HEK293 (cell line): ENCODE measurements at regions of chrX and their contacts with region 1.

Region 1: DNA sequence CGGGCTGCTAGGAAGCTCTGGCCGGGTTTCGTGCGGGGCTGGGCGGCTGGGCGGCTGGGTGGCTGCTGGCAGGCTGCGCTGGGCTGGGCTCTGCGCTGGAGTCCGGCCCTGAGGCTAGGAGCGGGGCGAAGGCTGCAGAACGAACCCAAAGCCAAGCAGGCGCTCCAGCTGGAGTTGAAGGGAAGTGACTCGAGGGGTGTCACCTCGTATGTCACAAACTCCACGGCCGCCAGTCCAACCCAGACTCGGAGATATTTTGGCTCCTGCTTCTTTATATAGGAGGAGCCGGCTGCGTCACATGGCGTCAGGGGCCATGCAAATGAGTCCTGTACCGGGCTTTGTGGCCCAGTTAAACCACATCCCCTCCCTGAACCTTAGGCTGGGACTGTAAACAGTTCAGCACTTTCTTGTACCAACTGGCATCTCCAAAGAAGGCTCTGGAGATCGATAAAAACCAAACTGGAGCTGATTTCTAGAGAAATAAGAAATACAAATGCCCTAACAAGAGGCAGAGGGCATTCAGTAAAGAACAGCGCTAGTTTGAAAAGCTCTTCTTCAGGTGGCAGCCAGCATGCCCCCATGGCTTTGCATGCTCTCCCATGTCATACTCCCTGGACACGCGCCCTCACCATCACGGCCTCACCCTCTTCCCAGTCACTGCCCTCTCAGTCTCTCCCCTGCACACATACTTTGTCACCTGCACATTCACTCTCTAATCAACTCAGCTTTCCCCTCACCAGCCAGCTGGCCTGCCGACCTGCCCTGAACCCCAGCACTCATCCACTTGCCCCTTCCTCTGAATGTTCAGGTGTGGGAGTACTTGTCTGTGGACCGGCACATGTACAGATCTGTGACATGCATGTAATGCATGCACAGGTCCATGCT is 58.5 kb downstream of the TSC22D3 start:
- H3K4me3 ChIP-seq: peak overlapping the region; percentile 44
- H3K27ac ChIP-seq: peak overlapping the region; percentile 87
- H3K4me1 ChIP-seq: peaks cover 10% of the 10 kb centered on the region
- CTCF ChIP-seq: peak; percentile 13; the same call in 1 of the 2 replicates

Region 2: DNA sequence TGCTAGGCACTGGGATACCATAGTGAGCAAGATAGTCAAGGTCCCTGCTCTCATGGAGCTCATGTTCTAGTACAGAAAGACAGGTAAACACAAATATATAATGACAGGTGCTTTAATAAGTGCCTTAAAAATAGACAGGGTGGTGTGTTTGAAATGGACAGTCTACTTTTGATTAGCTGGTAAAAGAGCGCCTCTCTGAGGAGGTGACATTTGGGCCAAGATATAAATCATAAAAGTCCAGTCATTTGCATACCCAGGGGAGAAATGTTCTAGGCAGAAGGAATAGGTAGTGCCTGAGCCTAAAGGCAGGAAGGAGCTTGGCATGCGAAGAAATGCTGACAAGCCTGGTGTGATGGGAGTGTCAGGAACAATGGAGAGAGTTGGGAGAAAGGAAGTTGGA is 427.0 kb before region 1 on chrX:
- CTCF ChIA-PET with region 1: no interaction called
- POLR2A ChIA-PET with region 1: no interaction called
- H3K4me3 ChIP-seq: no peak overlapping the region
- H3K27ac ChIP-seq: no peak overlapping the region
- H3K4me1 ChIP-seq: no peaks in the 10 kb centered on the region
- CTCF ChIP-seq: no peak

Region 3: DNA sequence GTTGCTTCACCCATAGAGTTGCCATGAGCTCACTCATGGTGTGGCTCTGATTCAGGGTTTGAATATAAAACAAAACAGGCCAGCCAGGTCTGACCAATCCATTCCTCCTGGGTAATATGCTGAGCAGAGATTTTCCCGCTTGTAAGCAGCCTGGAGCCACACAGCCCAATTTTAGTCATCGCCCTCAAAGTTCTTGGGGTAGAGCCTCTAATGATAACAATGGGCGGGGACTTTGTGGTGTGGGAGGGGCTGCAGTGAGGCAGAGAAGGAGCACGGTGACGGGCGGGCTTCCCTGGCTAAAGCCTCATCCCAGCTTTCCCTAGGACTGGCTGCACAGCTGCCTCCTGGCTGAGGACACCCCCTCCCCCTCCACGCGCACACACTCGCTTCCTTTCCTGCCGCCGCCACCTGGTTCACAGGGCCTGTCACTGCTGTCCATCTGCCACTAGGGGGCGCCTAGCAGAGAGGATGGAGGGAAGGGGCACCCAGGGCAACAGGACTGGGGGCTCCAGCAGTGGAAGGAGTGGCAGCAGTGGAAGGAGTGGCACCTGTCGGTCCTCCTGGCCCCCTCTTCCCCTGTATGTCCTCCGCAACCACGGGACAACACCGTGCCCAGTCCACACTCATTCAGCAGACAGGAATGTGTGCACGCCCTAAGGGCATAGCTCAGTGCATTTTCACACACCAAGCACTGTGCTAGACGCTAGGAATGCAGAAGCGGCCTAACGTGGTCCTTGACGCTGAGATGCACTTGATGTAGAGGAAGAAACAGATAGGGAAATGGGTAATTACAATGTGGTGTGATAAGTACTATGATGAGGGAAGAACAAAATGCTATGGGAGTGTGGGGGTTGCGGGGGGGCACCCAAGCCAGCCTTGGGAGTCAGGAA is 61.9 kb before region 1 on chrX:
- CTCF ChIA-PET with region 1: interaction called, 22 read pairs
- POLR2A ChIA-PET with region 1: interaction called, 3 read pairs
- H3K4me3 ChIP-seq: no peak overlapping the region
- H3K27ac ChIP-seq: no peak overlapping the region
- H3K4me1 ChIP-seq: no peaks in the 10 kb centered on the region
- CTCF ChIP-seq: peak; percentile 76

Region 4: DNA sequence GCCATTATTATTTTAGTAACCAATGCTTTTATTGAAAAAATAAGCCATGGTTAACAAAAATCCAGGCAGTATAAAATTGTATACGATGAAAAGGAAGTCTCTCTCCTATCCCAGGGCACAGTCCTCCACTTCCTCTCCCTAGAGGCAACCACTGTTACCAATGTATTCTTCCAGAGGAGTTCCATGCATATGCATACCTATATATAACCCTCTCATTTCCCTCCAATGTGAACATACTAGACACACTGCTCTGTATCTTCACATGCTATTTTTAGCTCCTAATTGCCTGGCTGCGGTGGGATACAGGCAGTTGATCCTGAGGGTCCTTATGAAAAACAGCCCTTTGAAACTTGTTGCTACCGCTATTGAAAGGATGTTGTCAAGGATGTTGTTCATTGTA is 54.9 kb before region 1 on chrX:
- CTCF ChIA-PET with region 1: interaction called, 22 read pairs
- POLR2A ChIA-PET with region 1: interaction called, 3 read pairs
- H3K4me3 ChIP-seq: no peak overlapping the region
- H3K27ac ChIP-seq: no peak overlapping the region
- H3K4me1 ChIP-seq: no peaks in the 10 kb centered on the region
- CTCF ChIP-seq: no peak

Region 5: DNA sequence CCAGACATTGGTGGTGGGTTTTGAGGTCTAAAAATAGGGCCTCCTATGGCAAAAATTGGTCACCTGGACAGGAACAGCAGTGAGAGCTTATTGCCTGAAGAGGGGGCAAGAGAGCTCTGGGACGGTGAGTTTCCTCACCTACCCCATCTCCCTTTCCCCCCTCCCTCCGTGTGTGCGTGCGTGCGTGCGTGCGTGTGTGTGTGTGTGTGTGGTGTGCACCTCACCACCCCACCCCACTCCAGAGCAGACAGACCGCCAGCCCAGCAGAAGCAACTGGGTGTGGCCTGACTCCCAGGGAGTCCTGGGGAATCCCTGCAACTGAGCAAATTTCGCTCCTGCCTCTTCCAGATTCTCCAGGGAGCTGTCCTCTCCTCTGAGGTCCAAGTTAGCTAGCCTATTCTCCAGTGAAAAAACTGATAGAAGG is 44.1 kb before region 1 on chrX:
- CTCF ChIA-PET with region 1: interaction called, 161 read pairs
- POLR2A ChIA-PET with region 1: interaction called, 31 read pairs
- H3K4me3 ChIP-seq: no peak overlapping the region
- H3K27ac ChIP-seq: peak overlapping the region; percentile 32; the same call in 1 of the 2 replicates
- H3K4me1 ChIP-seq: peaks cover 21% of the 10 kb centered on the region
- CTCF ChIP-seq: peak; percentile 77

Region 6: DNA sequence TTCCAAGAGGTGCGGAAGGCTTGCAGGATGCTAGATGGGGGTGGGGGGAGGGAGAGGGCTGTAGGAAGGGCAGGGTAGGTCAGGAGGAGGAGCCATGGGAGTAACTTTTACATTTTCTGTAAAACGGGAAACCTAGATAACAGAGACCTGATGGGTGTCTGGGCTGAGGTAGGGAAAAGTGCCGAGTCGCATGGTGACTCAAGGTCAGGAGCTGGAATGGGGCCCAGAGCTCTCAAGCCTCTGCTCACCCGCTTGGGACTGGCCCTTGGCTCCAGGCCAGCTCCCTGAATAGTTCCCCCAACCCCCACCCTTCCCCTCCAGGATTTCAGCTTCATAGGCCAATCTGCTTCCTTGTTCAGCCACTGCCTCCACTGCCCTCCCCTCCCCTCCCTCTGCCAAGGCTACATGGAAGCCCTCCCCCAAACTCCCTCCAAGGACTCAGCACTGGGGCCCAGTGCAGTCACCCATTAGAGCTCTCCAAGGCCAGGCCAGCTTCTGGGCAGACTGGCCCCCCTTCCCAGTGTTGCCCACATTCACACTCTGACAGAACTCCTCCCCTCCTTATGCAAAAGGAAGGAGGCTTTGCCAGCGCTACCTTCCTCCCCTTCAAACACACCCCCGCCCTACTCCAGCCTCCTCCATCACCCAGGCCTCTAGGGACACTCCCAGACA is 14.9 kb after region 1 on chrX:
- CTCF ChIA-PET with region 1: interaction called, 16 read pairs
- POLR2A ChIA-PET with region 1: interaction called, 45 read pairs
- H3K4me3 ChIP-seq: no peak overlapping the region
- H3K27ac ChIP-seq: peak overlapping the region; percentile 70
- H3K4me1 ChIP-seq: peaks cover 27% of the 10 kb centered on the region
- CTCF ChIP-seq: no peak

Region 7: GRCh38 chrX:107902721-107903120 is 185.7 kb after region 1 on chrX:
- CTCF ChIA-PET with region 1: no interaction called
- POLR2A ChIA-PET with region 1: no interaction called
- H3K4me3 ChIP-seq: no peak overlapping the region
- H3K27ac ChIP-seq: no peak overlapping the region
- H3K4me1 ChIP-seq: no peaks in the 10 kb centered on the region
- CTCF ChIP-seq: no peak

Region 8: GRCh38 chrX:107996124-107996523 is 279.1 kb after region 1 on chrX:
- CTCF ChIA-PET with region 1: no interaction called
- POLR2A ChIA-PET with region 1: no interaction called
- H3K4me3 ChIP-seq: no peak overlapping the region
- H3K27ac ChIP-seq: no peak overlapping the region
- H3K4me1 ChIP-seq: no peaks in the 10 kb centered on the region
- CTCF ChIP-seq: no peak